Activated B cell treated with CpG ODN at 0.5 μM for 24 hours (primary cell): ENCODE measurements at regions of chr11 and their contacts with region 1.

Region 1: GRCh38 chr11:75903276-75903675 is 88.3 kb downstream of the UVRAG start:
- DNase-seq: no peak
- ATAC-seq: no peak
- H3K4me3 Mint-ChIP-seq: no peak overlapping the region
- H3K27ac Mint-ChIP-seq: no peak overlapping the region
- H3K4me1 Mint-ChIP-seq: peaks cover 58% of the 10 kb centered on the region
- H3K27me3 Mint-ChIP-seq: no peaks in the 10 kb centered on the region
- CTCF ChIP-seq: no peak

Region 2: GRCh38 chr11:76025068-76025467 is 121.8 kb after region 1 on chr11:
- CTCF ChIA-PET with region 1: no interaction called
- POLR2A ChIA-PET with region 1: no interaction called
- intact Hi-C with region 1: no loop called
- DNase-seq: no peak
- ATAC-seq: no peak
- H3K4me3 Mint-ChIP-seq: no peak overlapping the region
- H3K27ac Mint-ChIP-seq: peak overlapping the region; percentile 8
- H3K4me1 Mint-ChIP-seq: peaks cover 16% of the 10 kb centered on the region
- H3K27me3 Mint-ChIP-seq: no peaks in the 10 kb centered on the region
- CTCF ChIP-seq: no peak

Region 3: GRCh38 chr11:76041210-76041609 is 137.9 kb after region 1 on chr11:
- CTCF ChIA-PET with region 1: no interaction called
- POLR2A ChIA-PET with region 1: no interaction called
- intact Hi-C with region 1: no loop called
- DNase-seq: no peak
- ATAC-seq: no peak
- H3K4me3 Mint-ChIP-seq: no peak overlapping the region
- H3K27ac Mint-ChIP-seq: no peak overlapping the region
- H3K4me1 Mint-ChIP-seq: no peaks in the 10 kb centered on the region
- H3K27me3 Mint-ChIP-seq: no peaks in the 10 kb centered on the region
- CTCF ChIP-seq: no peak

Region 4: GRCh38 chr11:76083563-76084451 is 180.5 kb after region 1 on chr11:
- CTCF ChIA-PET with region 1: no interaction called
- POLR2A ChIA-PET with region 1: no interaction called
- intact Hi-C with region 1: no loop called
- DNase-seq: no peak
- ATAC-seq: no peak
- H3K4me3 Mint-ChIP-seq: no peak overlapping the region
- H3K27ac Mint-ChIP-seq: no peak overlapping the region
- H3K4me1 Mint-ChIP-seq: peaks cover 9% of the 10 kb centered on the region
- H3K27me3 Mint-ChIP-seq: no peaks in the 10 kb centered on the region
- CTCF ChIP-seq: no peak

Region 5: DNA sequence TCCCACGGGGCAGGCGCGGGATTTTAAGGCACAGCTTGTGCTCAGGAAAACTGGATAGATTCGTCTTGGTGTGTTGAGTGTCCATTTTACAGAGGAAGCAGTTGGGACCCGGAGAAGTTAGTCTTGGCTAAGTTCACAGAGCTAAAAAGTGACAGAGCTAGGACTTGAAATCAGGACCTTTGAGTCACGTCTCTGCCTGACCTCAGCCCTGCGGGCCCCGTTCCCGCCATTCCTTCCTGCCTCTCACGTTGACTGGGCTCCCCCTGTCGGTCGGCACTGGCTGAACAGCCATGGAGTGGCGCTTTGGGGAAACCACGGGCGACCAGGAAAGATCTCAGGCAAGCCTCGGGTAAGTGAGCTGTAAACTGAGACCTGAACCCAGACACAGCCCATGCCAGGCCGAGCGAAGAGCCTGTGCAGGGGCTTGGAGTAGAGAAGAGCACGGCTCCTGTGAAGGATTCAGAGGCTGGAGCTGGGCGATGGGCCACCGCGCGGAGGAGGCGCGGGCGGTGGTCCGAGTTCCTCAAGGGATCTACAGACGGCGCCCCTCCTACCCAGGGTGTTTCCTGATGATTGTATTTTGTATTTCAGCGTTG is 248.9 kb after region 1 on chr11:
- CTCF ChIA-PET with region 1: interaction called, 27 read pairs
- POLR2A ChIA-PET with region 1: no interaction called
- intact Hi-C with region 1: no loop called
- DNase-seq: peak; percentile 68
- ATAC-seq: peak; percentile 88
- H3K4me3 Mint-ChIP-seq: peak overlapping the region; percentile 80
- H3K27ac Mint-ChIP-seq: peak overlapping the region; percentile 41
- H3K4me1 Mint-ChIP-seq: peaks cover 22% of the 10 kb centered on the region
- H3K27me3 Mint-ChIP-seq: no peaks in the 10 kb centered on the region
- CTCF ChIP-seq: no peak